H1 (cell line): ENCODE measurements at regions of chr9 and their contacts with region 1.

Region 1: DNA sequence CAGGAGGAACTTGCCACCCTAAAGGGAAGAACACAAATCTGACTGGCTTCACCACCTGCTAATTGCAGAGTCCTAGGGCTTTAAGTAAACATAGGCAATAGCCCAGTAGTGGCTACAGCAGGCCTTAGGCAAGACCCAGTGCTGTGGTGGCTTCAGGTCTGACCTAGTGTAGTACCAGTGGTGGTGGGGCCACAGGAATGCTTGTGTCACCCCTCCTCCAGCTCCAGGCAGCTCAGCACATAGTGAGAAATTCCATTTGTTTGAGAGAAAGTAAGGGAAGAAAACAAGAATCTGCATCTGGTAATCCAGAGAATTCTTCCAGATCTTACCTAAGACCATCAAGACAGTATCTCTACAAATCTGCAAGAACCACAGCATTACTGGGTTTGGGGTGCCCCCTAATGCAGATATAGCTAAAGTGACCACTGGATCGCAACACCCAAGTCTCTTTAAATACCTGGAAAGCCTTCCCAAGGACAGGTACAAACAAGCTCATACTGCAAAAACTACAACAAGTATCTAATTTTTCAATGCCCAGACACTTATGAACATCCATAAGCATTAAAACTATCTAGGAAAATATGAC is 102.6 kb upstream of the TRPM3 start:
- DNase-seq: no peak
- H3K4me3 ChIP-seq: no peak overlapping the region
- H3K27ac ChIP-seq: no peak overlapping the region
- H3K4me1 ChIP-seq: no peaks in the 10 kb centered on the region; a peak in 1 of 7 replicates
- H3K27me3 ChIP-seq: no peaks in the 10 kb centered on the region
- CTCF ChIP-seq: peak in 2 of 3 experiments; percentile 55 to 58; a peak in 3 of 4 replicates
- EP300 ChIP-seq: no peak
- POLR2A ChIP-seq: no peak
- RAD21 ChIP-seq: peak; percentile 84 to 88

Region 2: DNA sequence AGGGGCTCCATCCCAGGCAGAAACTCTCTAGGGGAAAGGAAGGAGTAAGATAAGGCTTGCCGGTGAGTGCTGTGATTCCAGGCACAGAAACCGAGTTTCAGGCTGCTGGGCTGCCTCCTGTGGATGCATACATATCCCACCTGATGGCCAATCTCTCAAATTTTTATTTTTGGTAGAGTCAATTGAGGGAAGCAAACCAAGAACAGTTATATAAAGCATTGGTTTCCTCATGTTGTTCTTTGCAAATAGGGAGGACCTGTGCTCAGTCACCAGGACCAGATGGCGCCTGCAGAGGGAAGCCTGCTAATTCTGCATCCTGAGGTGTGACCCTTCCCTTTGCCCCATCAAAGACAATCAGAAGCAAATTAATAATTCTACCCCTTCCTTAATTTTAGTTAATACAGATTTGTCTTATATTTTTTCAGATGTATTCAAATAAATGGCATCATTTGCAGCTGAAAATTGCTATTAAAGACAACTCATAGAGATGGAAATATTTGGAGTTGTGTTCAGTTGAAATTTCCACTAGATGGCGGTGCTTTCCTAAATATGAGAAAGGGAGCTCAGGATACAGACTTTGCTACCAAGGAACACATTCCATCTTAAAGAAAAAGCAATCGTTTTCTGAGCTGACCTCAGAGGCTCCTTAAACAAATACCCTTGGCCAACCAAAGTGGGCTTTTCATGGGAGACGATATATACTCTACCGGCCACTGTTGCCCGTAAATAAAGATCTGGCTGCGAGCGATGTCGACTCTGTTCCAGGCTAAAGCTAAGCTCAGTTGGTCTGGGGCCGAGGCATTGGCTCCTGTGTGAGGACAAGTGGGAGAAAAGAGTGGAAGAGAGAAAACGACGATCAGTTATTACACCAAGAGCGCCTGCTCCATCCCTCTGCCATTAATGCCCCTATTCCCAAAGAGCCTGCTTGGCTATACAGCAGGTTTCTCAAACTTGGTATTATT is 583.9 kb before region 1 on chr9:
- CTCF ChIA-PET with region 1: interaction called, 47 read pairs
- POLR2A ChIA-PET with region 1: no interaction called
- DNase-seq: no peak
- H3K4me3 ChIP-seq: peak overlapping the region in 2 of 4 experiments; percentile 7 to 36; a peak in 2 of 8 replicates
- H3K27ac ChIP-seq: no peak overlapping the region
- H3K4me1 ChIP-seq: peaks cover 2 to 9% (median 6%) of the 10 kb centered on the region in 4 experiments; a peak in 3 of 7 replicates
- H3K27me3 ChIP-seq: no peaks in the 10 kb centered on the region
- CTCF ChIP-seq: peak in 2 of 3 experiments; percentile 55 to 61; a peak in 2 of 4 replicates
- EP300 ChIP-seq: no peak
- POLR2A ChIP-seq: no peak
- RAD21 ChIP-seq: peak; percentile 90 to 91

Region 3: GRCh38 chr9:71096421-71097108 is 127.5 kb before region 1 on chr9:
- CTCF ChIA-PET with region 1: no interaction called
- POLR2A ChIA-PET with region 1: no interaction called
- DNase-seq: no peak
- H3K4me3 ChIP-seq: no peak overlapping the region
- H3K27ac ChIP-seq: no peak overlapping the region
- H3K4me1 ChIP-seq: no peaks in the 10 kb centered on the region; a peak in 1 of 7 replicates
- H3K27me3 ChIP-seq: no peaks in the 10 kb centered on the region
- CTCF ChIP-seq: no peak
- EP300 ChIP-seq: no peak
- POLR2A ChIP-seq: no peak
- RAD21 ChIP-seq: no peak